ENCODE measurements at regions of chr10 and their contacts with region 1.

Region 1: GRCh38 chr10:69644658-69645295 is 14.7 kb downstream of the FAM241B start:
- DNase-seq: peak; percentile 59
- ATAC-seq: peak; percentile 57 to 69

Region 2: GRCh38 chr10:68959695-68960524 is 684.9 kb before region 1 on chr10:
- intact Hi-C with region 1: no loop called
- DNase-seq: no peak
- ATAC-seq: no peak

Region 3: GRCh38 chr10:69710008-69710888 is 65.5 kb after region 1 on chr10:
- intact Hi-C with region 1: loop called in 1 of 2 experiments (anchors 5 kb)
- DNase-seq: no peak
- ATAC-seq: no peak

Region 4: DNA sequence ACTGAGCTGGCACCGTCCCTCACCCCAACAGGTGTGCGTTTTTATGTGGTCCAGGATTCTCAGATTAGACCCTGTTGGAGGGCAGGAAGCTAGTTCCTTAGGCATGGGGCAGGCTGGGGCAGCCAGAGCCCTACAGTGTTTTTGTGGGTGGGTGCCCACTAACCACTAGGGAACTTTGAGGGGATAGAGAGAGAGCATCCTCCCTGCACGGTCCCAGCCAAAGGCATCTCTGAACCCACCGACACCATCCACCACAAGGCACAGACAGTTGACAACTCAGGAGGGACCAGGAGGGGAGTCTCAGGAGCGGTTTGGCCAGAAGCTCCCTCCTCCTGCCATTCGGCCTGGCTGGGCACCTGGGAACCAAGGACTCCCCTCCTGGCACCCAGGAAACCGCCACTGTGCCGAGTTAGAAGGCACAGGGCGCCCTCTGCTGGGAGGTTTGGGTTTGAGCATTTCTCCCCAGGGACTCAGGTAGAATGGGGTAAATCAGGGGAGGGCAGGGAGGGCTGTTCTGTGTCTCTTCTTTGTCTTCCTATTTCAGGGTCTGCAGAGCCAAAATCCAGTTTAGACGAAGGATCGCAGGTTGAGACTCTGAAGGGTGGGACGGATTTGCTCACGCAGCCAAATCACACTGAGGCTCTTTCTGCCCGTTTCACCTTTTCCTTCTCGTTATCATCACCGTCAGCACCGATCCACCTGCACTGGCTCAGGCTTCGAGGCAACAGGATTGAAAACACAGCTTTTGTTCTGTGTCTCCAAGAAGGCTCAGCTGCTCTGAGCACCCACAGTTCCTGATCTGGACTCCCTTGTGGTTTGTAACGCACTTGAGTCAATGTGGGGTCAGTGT is 72.2 kb after region 1 on chr10:
- intact Hi-C with region 1: loop called (anchors 2 to 5 kb)
- DNase-seq: no peak
- ATAC-seq: peak; percentile 22 to 51

Region 5: DNA sequence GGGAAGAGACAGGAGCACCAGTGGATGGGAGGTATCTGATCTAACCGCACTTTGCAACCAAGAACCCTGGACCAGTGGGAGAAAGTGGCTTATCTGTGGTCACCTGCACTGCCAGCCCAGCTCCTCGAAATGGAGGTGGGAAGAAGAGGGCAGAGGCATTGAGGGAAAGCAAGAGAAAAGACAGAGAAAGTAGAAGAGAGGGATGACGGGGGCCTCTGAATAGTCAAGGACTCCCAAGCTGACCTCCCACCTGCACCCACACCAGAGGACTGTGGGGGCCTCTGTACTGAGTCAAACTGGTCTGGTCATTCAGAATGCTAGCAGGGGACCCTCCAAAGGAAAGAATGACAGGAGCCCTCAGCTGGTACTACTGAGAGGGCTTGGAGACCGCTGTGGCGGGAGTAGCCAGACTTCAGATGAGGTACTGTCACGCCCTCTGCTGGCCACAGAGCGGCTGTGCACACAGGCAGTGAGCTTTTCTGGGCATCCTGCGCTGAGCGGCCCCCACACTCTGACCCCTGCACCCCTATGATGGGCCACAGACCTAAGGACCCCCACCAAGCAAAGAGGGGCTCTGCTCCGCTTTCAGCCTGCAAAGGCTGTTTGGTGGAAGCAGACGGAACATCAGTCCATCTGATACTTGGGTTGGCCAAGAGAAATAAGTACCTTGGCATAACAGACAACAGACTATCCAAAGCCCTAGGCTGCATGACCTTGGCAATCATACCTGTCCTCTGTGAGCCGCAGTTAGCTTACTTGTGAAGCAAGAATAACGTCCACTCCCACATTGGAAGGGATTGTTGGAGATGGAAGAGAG is 269.8 kb after region 1 on chr10:
- intact Hi-C with region 1: loop called (anchors 2 to 5 kb)
- DNase-seq: peak; percentile 80
- ATAC-seq: peak; percentile 70 to 79

Measured in left cardiac atrium (tissue), 4 donors.